PC-3 (cell line): ENCODE measurements at regions of chr6 and their contacts with region 1.

Region 1: GRCh38 chr6:119205911-119206618 is 127.6 kb upstream of the FAM184A start:
- DNase-seq: no peak
- ATAC-seq: no peak
- H3K4me3 ChIP-seq: no peak overlapping the region
- H3K27ac ChIP-seq: no peak overlapping the region
- H3K4me1 ChIP-seq: no peaks in the 10 kb centered on the region
- H3K27me3 ChIP-seq: no peaks in the 10 kb centered on the region
- CTCF ChIP-seq: no peak

Region 2: GRCh38 chr6:119333707-119334295 is 127.7 kb after region 1 on chr6:
- CTCF ChIA-PET with region 1: no interaction called
- POLR2A ChIA-PET with region 1: no interaction called
- intact Hi-C with region 1: loop called (anchors 5 kb)
- DNase-seq: peak; percentile 54
- ATAC-seq: peak; percentile 50
- H3K4me3 ChIP-seq: no peak overlapping the region
- H3K27ac ChIP-seq: no peak overlapping the region
- H3K4me1 ChIP-seq: no peaks in the 10 kb centered on the region
- H3K27me3 ChIP-seq: no peaks in the 10 kb centered on the region
- CTCF ChIP-seq: peak; percentile 64